Left lung (tissue), 14 donors: ENCODE measurements at regions of chr7 and their contacts with region 1.

Region 1: GRCh38 chr7:91880413-91881241 is at the start of gene MTERF1:
- DNase-seq: peak; percentile 93 to 97 (median 95)
- ATAC-seq: peak; percentile 99
- H3K4me3 ChIP-seq: peak within 1 kb of the TSS; percentile 56 to 76
- H3K27ac ChIP-seq: peak within 1 kb of the TSS; percentile 35 to 65
- H3K4me1 ChIP-seq: peaks cover 0 to 36% of the 10 kb centered on the region in 2 donors
- H3K27me3 ChIP-seq: no peaks in the 10 kb centered on the region
- CTCF ChIP-seq: peak; percentile 86 to 94
- polyA plus RNA-seq, gene MTERF1: 18.1 to 23.5 (median 18.7) TPM

Region 2: GRCh38 chr7:92447345-92448204 is 566.9 kb after region 1 on chr7 and contains the start of gene GATAD1:
- intact Hi-C with region 1: loop called in 1 of 2 experiments (anchors 10 kb)
- DNase-seq: peak; percentile 88 to 97 (median 95)
- ATAC-seq: peak; percentile 98
- H3K4me3 ChIP-seq: peak within 1 kb of the TSS; percentile 91 to 99
- H3K27ac ChIP-seq: peak within 1 kb of the TSS; percentile 96 to 98
- H3K4me1 ChIP-seq: peaks cover 0 to 18% of the 10 kb centered on the region in 2 donors
- H3K27me3 ChIP-seq: no peaks in the 10 kb centered on the region
- CTCF ChIP-seq: peak; percentile 94
- polyA plus RNA-seq, gene GATAD1: 45.8 to 74.3 (median 62.3) TPM